IMR-90 (cell line): ENCODE measurements at regions of chr12 and their contacts with region 1.

Region 1: GRCh38 chr12:53213348-53213747 is 6.3 kb upstream of the ITGB7 start:
- DNase-seq: peak; percentile 70
- ATAC-seq: peak; percentile 86
- H3K4me3 ChIP-seq: no peak overlapping the region
- H3K27ac ChIP-seq: no peak overlapping the region
- H3K4me1 ChIP-seq: peaks cover 19% of the 10 kb centered on the region
- H3K27me3 ChIP-seq: no peaks in the 10 kb centered on the region
- CTCF ChIP-seq: peak; percentile 95
- POLR2A ChIP-seq: 0 out of 2 replicates have a peak, but pooled peaks have one; percentile 32
- RAD21 ChIP-seq: peak; percentile 99

Region 2: DNA sequence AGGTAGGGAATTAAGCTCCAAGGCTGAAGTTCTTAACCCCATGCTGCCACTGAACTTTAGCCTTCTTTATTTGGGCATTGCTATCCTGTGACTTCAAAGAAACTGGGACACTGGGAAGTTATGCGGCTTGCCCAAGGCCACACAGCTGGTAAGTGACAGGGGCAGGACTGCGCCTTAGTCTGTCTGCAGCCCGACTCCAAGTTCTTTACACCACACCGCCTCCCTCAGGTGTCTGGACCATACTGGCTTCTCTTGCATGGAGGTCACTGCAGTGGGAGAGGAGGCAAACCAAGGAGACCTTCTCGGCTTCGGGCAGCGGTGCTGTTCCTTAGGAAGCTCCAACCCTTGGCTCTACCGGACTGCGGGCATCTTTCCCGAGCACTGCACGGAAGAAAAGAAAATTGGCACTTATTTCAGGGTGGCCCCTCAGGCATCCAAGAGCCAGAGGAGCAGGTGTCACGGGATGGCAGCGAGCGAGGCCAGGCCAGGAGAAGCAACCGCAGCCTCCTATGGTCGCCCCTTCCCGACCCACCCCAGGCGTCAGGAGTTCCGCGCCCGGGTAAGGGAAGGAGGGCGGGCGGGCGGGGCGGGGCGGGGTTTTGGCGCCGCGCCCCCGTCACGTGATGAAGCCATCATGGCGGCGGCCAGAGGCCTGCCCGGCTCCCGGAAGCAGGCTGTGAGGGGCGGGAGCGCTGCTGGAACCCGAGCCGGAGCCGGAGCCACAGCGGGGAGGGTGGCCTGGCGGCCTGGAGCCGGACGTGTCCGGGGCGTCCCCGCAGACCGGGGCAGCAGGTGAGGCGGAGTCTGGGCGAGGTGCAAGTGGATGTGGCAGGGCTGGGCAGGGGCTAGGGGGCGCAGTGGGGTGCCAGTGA is 38.4 kb after region 1 on chr12:
- CTCF ChIA-PET with region 1: interaction called, 4 read pairs
- POLR2A ChIA-PET with region 1: no interaction called
- dilution Hi-C with region 1: no loop called
- in situ Hi-C with region 1: no loop called
- intact Hi-C with region 1: loop called (anchors 1 kb)
- DNase-seq: peak; percentile 64
- ATAC-seq: peak; percentile 91
- H3K4me3 ChIP-seq: peak overlapping the region; percentile 85
- H3K27ac ChIP-seq: peak overlapping the region; percentile 93
- H3K4me1 ChIP-seq: peaks cover 11% of the 10 kb centered on the region
- H3K27me3 ChIP-seq: no peaks in the 10 kb centered on the region
- CTCF ChIP-seq: peak; percentile 41
- POLR2A ChIP-seq: peak; percentile 67
- RAD21 ChIP-seq: peak; percentile 51

Region 3: DNA sequence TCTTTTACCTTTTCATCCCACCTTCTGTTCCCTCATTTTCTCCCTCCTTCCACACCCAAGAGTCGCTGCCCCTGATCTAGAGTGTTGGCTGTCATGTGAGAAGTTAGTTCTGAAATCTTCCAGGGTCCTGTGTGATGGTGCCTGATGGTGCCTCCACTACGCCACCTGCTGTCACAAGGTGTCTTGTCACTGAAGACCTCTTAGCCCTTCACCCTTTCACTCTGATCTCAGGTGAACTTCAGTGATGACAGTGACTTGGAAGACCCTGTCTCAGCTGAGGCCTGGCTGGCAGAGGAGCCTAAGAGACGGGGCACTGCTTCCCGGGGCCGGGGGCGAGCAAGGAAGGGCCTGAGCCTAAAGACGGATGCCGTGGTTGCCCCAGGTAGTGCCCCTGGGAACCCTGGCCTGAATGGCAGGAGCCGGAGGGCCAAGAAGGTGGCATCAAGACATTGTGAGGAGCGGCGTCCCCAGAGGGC is 74.4 kb after region 1 on chr12:
- CTCF ChIA-PET with region 1: interaction called, 6 read pairs
- POLR2A ChIA-PET with region 1: no interaction called
- dilution Hi-C with region 1: no loop called
- in situ Hi-C with region 1: loop called (anchors 5 kb)
- intact Hi-C with region 1: loop called (anchors 1 kb)
- DNase-seq: peak; percentile 61
- ATAC-seq: peak; percentile 84
- H3K4me3 ChIP-seq: no peak overlapping the region
- H3K27ac ChIP-seq: no peak overlapping the region
- H3K4me1 ChIP-seq: peaks cover 22% of the 10 kb centered on the region
- H3K27me3 ChIP-seq: no peaks in the 10 kb centered on the region
- CTCF ChIP-seq: peak; percentile 71
- POLR2A ChIP-seq: no peak
- RAD21 ChIP-seq: peak; percentile 75

Region 4: GRCh38 chr12:53321074-53321814 is 107.9 kb after region 1 on chr12 and contains the start of gene AAAS:
- CTCF ChIA-PET with region 1: interaction called, 5 read pairs
- POLR2A ChIA-PET with region 1: no interaction called
- dilution Hi-C with region 1: no loop called
- in situ Hi-C with region 1: no loop called
- intact Hi-C with region 1: loop called (anchors 10 kb)
- DNase-seq: peak; percentile 93
- ATAC-seq: peak; percentile 84
- H3K4me3 ChIP-seq: peak within 1 kb of the TSS; percentile 83
- H3K27ac ChIP-seq: peak within 1 kb of the TSS; percentile 95
- H3K4me1 ChIP-seq: peaks cover 12% of the 10 kb centered on the region
- H3K27me3 ChIP-seq: no peaks in the 10 kb centered on the region
- CTCF ChIP-seq: peak; percentile 98
- POLR2A ChIP-seq: peak; percentile 56; the same call in 1 of the 2 replicates
- RAD21 ChIP-seq: peak; percentile 69
- total RNA-seq, gene AAAS: 37.5 and 44.6 TPM in 2 replicates

Region 5: DNA sequence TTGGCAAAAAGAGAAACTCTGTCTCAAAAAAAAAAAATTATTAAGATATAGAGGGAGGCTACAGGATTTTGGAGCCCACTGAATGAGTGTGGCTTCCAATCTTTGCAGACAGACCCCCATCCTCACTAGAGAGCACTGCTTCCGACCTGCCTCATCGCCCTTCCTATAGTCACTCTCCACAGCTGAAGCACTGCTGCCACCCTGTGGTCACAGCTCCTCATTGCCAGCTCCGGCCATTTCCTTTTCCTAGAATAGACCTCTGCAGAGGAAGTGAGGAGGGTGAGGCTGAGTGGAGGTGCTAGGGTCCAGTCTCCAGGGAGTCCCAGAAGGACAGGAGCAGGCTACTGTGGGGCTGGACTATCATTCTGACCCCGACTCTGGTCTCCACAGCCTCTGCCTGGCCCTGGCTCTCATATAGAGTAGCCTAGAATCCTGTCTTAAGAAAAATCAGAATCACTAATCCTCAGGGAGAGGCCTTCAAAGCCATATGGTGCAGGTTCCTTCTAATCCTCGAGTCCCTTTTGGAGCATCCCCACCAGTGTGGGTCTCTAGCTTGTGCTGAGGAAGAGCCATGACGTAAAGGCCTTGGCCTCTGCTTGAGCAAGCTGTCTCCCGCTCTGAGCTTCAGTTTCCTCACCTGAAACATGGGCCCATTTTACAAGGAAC is 295.3 kb after region 1 on chr12:
- CTCF ChIA-PET with region 1: no interaction called
- POLR2A ChIA-PET with region 1: no interaction called
- dilution Hi-C with region 1: no loop called
- in situ Hi-C with region 1: loop called (anchors 10 kb)
- intact Hi-C with region 1: loop called (anchors 5 kb)
- DNase-seq: peak; percentile 67
- ATAC-seq: peak; percentile 93
- H3K4me3 ChIP-seq: no peak overlapping the region
- H3K27ac ChIP-seq: no peak overlapping the region
- H3K4me1 ChIP-seq: no peaks in the 10 kb centered on the region
- H3K27me3 ChIP-seq: no peaks in the 10 kb centered on the region
- CTCF ChIP-seq: peak; percentile 94
- POLR2A ChIP-seq: peak; percentile 52; the same call in 1 of the 2 replicates
- RAD21 ChIP-seq: peak; percentile 95

Region 6: DNA sequence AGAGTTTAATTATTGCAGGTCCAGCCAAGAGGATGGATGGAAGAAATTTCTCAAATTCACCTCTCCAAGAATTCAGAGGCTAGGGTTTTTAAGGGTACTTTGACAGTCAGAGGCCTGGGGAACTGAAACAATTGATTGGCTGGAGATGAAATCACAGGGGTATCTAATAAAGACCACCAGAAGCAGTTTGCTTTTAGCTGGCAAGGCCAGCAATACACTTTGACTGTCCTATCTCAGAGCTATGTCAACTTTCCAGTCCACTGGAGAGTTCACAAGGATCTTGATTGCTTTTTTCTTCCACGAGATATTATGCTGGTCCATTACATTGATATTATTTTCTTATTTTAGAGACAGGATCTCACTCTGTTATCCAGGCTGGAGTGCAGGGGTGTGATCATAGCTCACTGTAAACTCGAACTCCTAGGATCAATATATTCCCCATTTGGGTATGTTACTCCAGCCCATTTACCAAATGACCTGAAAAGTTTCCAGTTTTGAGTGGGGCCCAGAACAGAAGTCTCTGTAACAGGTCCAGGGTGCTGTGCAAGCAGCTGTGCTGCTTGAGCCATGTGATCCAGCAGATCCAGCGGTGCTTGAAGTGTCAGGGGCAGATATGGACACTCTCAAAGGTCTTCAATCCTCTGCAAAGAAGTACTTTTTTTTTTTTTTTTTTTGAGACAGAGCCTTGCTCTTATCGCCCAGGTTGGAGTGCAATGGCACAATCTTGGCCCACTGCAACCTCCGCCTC is 430.1 kb after region 1 on chr12:
- CTCF ChIA-PET with region 1: no interaction called
- POLR2A ChIA-PET with region 1: no interaction called
- dilution Hi-C with region 1: no loop called
- in situ Hi-C with region 1: no loop called
- intact Hi-C with region 1: no loop called
- DNase-seq: no peak
- ATAC-seq: no peak
- H3K4me3 ChIP-seq: no peak overlapping the region
- H3K27ac ChIP-seq: no peak overlapping the region
- H3K4me1 ChIP-seq: no peaks in the 10 kb centered on the region
- H3K27me3 ChIP-seq: no peaks in the 10 kb centered on the region; the same call in 1 of the 2 replicates
- CTCF ChIP-seq: no peak
- POLR2A ChIP-seq: no peak
- RAD21 ChIP-seq: no peak